Left lung (tissue), 14 donors: ENCODE measurements at regions of chr6 and their contacts with region 1.

Region 1: DNA sequence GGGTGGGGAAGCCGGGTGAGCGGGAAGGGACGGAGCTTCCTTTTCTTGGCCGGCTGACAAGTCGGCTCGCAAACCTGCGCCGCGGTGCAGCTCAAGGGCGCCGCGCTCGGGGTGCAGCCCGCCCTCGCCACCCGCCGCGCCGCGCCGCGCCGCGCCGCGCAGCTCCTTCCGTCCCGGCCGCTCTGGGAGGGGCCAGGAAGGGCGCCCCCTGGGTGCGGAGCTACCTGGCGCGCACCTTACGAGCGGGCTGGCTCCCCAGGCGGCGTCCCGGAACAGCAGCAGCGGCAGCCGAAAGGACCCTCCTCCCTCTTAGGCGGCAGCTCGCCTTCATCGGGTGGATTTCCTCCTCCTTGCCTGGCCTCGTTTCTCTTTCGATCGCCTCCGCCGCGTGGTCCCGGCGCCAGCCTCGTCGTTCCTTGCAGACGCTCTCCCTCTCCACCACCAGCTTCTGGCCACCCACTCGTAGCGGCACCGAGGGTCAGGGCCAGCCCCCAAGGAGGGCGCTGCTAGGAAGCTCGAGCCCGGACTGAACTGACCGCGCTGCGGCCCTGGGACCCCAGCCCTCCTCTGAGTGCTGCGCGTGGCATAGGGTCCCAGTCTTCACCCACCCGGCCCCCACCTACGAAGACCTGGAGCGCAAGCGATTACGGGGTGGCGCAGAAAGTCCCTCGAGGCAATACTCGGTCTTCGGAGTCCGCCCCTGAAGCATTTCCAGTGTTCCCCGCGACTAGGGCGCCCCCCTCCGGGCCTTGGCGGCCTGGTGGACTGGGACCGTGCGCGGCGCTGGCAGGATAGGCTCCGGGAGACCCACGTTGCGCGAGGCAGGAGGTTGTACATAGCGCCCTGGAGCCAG is at the start of gene MAP3K5:
- DNase-seq: peak; percentile 83 to 99 (median 92)
- ATAC-seq: peak; percentile 90
- H3K4me3 ChIP-seq: peak within 1 kb of the TSS; percentile 86 to 91
- H3K27ac ChIP-seq: peak within 1 kb of the TSS; percentile 96 to 99
- H3K4me1 ChIP-seq: peaks cover 6 to 44% of the 10 kb centered on the region in 2 donors
- H3K27me3 ChIP-seq: no peaks in the 10 kb centered on the region
- CTCF ChIP-seq: peak; percentile 70 to 82
- polyA plus RNA-seq, gene MAP3K5: 6.3 to 7.5 (median 7.0) TPM

Region 2: DNA sequence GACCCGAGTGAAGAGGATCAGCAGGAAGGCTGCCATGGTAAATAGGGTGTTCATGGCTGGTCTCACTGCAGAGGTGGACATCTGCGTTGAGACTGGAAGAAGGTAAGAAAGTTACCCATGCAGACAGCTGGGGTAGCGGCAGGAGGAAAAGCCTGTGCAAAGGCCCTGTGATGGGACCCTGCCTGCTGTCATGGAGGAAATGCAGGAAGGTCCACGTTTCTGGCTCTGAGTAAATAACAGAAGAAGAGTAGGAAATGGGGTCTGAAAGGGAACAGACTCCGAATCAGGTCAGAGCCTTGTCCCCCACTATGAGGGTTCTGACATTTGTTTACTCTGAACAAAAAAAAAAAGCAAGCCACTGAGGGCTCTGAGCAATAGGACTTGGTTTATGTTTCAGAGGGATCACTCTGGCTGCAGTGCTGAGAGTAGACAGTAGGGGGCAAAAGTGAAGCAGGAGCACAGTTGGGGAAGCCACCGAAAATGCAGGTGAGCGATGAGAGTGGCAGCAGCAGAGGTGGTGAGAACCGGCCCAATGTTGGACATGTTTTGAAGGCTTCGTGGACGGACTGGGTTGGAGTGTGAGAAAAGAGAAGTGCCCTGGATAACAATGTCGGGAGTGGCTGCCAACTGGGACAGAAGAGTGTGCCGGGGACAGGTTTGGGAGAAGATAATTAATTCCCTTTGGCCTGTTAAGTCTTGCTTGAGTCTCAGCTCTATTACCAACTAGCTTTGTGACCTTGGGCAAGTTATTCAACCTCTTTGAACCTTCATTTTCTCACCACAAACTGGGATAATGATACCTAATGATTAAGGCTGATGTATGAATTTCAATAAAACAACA is 184.5 kb before region 1 on chr6:
- intact Hi-C with region 1: loop called in 1 of 2 experiments (anchors 10 kb)
- DNase-seq: peak in 2 of 4 donors; percentile 54 to 66
- ATAC-seq: peak; percentile 80
- H3K4me3 ChIP-seq: no peak overlapping the region
- H3K27ac ChIP-seq: no peak overlapping the region
- H3K4me1 ChIP-seq: peaks cover 15 to 46% of the 10 kb centered on the region in 2 donors
- H3K27me3 ChIP-seq: no peaks in the 10 kb centered on the region
- CTCF ChIP-seq: peak; percentile 73 to 78

Region 3: GRCh38 chr6:136643850-136644596 is 148.6 kb before region 1 on chr6:
- intact Hi-C with region 1: loop called in 1 of 2 experiments (anchors 2 kb)
- DNase-seq: peak in 3 of 4 donors; percentile 67 to 89 (median 88)
- ATAC-seq: peak; percentile 99
- H3K4me3 ChIP-seq: no peak overlapping the region
- H3K27ac ChIP-seq: peak overlapping the region; percentile 50 to 58
- H3K4me1 ChIP-seq: peaks cover 12 to 32% of the 10 kb centered on the region in 2 donors
- H3K27me3 ChIP-seq: no peaks in the 10 kb centered on the region
- CTCF ChIP-seq: peak; percentile 90 to 93

Region 4: DNA sequence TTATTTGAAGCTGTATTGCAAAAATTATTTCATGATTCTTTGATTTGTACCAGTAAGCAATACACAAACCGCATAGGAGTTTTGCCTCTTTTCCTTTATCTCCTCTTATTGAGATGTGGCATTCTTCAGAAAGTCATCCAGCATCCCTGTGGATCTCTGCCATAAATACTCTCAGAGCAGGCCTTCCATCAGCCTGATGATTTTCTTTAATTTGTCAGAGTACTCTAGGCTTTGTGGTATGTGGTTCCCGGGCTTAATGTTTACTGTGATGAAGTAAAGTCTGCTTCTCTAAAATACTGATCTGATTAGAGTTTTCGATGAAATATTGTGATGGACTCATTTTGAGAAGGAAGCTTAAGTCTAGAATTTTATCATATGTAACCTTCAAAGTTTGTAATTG is 98.3 kb after region 1 on chr6:
- intact Hi-C with region 1: no loop called
- DNase-seq: no peak
- ATAC-seq: no peak
- H3K4me3 ChIP-seq: no peak overlapping the region
- H3K27ac ChIP-seq: no peak overlapping the region
- H3K4me1 ChIP-seq: no peaks in the 10 kb centered on the region
- H3K27me3 ChIP-seq: no peaks in the 10 kb centered on the region
- CTCF ChIP-seq: no peak

Region 5: GRCh38 chr6:136962661-136963060 is 170.0 kb after region 1 on chr6:
- intact Hi-C with region 1: no loop called
- DNase-seq: peak in 1 of 4 donors; percentile 33
- ATAC-seq: no peak
- H3K4me3 ChIP-seq: no peak overlapping the region
- H3K27ac ChIP-seq: no peak overlapping the region
- H3K4me1 ChIP-seq: no peaks in the 10 kb centered on the region
- H3K27me3 ChIP-seq: peaks cover 0 to 15% of the 10 kb centered on the region in 2 donors
- CTCF ChIP-seq: no peak